Lower leg skin (tissue), 4 donors: ENCODE measurements at regions of chr10 and their contacts with region 1.

Region 1: DNA sequence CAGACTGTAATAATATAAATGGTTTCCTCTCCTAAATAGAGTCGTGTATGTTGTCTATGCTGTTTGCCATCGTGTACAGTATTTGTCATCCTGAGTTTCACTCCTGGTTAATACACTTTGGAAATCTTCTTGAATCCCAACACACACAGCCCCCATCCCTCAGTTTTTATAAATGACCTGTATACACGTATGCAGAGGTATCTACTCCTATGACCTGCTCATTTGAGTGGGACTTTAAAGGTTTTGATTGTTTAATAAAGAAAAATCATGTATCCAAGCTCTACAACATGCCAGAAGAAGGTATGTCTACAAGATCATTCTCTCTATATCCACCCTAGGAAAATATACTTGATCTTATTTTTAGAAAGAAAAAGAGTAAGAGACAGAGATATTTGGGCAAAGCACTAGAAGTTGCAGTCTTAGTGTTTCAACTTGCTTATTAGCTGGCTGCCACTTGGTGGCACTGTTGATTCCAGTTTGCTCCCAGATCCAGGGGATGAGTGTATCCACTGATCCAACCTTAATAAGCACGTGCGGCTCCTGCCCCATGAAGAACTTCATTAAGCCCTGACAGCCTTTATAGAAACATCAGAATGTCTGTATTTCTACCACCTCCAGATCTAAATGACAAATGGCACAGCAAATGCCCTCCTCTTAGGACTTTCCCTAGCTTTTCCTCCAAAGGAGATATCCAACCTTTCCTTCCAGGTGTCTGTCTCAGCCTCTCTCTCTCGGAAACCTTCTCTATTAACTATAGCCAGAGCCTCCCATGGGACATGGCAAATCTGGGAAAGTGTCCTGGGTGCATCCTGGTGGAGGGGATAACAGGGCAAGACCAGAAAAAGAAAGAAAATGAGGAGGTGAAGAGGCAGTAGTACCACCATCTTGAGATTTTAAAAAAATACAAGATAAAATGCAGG is 181.6 kb upstream of the NEBL start:
- DNase-seq: peak in 1 of 2 donors; percentile 60
- H3K4me3 ChIP-seq: no peak overlapping the region
- CTCF ChIP-seq: peak in 1 of 3 donors; percentile 49
- POLR2A ChIP-seq: no peak

Region 2: DNA sequence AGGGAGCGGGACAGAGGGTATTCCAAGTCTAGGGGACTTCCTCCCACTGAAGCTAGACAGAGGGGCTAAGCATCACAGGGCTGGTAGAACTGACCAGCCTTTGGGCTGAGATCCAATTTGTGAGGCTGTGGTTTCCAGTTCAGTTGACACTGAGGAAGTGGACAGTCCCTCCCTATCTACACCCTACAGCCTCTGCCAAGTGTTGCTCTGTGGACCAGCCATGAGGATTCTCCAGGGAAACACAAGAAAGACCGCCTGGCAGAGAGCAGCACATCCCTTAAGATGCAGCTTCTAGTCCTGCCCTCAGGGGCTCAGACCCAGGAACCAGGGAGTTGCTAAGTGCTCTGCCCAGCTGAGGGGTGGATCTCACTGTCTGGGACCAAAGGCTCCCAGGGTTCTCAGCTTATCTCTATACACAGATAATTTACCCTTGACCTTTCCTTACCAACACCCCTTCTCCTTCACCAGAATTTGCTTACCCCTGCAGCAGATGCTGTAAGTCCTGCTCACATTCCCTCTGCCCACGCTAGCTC is 194.8 kb after region 1 on chr10:
- intact Hi-C with region 1: loop called (anchors 5 kb)
- DNase-seq: no peak
- H3K4me3 ChIP-seq: no peak overlapping the region
- CTCF ChIP-seq: no peak
- POLR2A ChIP-seq: no peak